ENCODE measurements at regions of chr3 and their contacts with region 1.

Region 1: DNA sequence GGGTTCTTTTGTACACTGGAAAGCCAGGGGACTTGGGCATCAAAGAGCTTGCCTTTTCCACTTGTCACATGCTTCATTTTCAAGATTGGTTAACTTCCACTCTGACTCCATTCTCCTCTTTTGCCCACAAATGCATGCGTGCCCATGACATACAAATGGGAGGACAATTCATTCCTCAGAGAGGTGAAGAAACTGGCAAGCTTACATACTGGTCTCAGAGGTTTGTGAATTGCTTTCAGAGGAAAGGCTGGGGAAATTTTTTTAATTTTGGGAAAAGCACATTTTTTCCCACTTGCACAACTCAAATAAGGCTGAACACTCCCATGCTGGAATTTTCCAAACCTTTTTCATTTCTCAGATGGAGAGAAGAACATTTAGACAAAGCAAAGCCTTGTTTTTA is 20.9 kb upstream of the AMOTL2 start:
- DNase-seq: no peak
- H3K4me3 ChIP-seq: no peak overlapping the region
- H3K27ac ChIP-seq: no peak overlapping the region
- H3K4me1 ChIP-seq: no peaks in the 10 kb centered on the region
- H3K27me3 ChIP-seq: peaks cover 6% of the 10 kb centered on the region
- CTCF ChIP-seq: no peak
- EP300 ChIP-seq: no peak
- POLR2A ChIP-seq: no peak

Region 2: GRCh38 chr3:134449277-134449676 is 54.2 kb after region 1 on chr3:
- in situ Hi-C with region 1: no loop called
- intact Hi-C with region 1: loop called (anchors 5 kb)
- DNase-seq: peak; percentile 39
- H3K4me3 ChIP-seq: no peak overlapping the region
- H3K27ac ChIP-seq: no peak overlapping the region
- H3K4me1 ChIP-seq: peaks cover 0 to 8% (median 0%) of the 10 kb centered on the region in 4 donors
- H3K27me3 ChIP-seq: no peaks in the 10 kb centered on the region
- CTCF ChIP-seq: peak in 4 of 5 experiments; percentile 30 to 51 (median 36)
- EP300 ChIP-seq: no peak
- POLR2A ChIP-seq: no peak

Region 3: GRCh38 chr3:134536781-134537180 is 141.7 kb after region 1 on chr3:
- in situ Hi-C with region 1: no loop called
- intact Hi-C with region 1: no loop called
- DNase-seq: no peak
- H3K4me3 ChIP-seq: no peak overlapping the region
- H3K27ac ChIP-seq: no peak overlapping the region
- H3K4me1 ChIP-seq: no peaks in the 10 kb centered on the region
- H3K27me3 ChIP-seq: no peaks in the 10 kb centered on the region
- CTCF ChIP-seq: no peak
- EP300 ChIP-seq: no peak
- POLR2A ChIP-seq: no peak